ENCODE measurements at regions of chr19 and their contacts with region 1.

Region 1: GRCh38 chr19:45250832-45251451 is at the start of gene MARK4:
- DNase-seq: peak; percentile 54
- ATAC-seq: peak; percentile 69
- H3K4me3 ChIP-seq: peak within 1 kb of the TSS; percentile 78
- H3K27ac ChIP-seq: no peak within 1 kb of the TSS
- H3K4me1 ChIP-seq: peaks cover 10% of the 10 kb centered on the region; the same call in 1 of the 2 replicates
- H3K27me3 ChIP-seq: no peaks in the 10 kb centered on the region
- CTCF ChIP-seq: no peak
- total RNA-seq, gene MARK4: 12.1 and 21.8 TPM in 2 replicates

Region 2: GRCh38 chr19:44954824-44955586 is 295.9 kb before region 1 on chr19 and contains the start of gene CLPTM1:
- CTCF ChIA-PET with region 1: no interaction called
- POLR2A ChIA-PET with region 1: no interaction called
- intact Hi-C with region 1: no loop called
- DNase-seq: peak; percentile 90
- ATAC-seq: peak; percentile 91
- H3K4me3 ChIP-seq: peak within 1 kb of the TSS; percentile 95
- H3K27ac ChIP-seq: peak within 1 kb of the TSS; percentile 92
- H3K4me1 ChIP-seq: peaks cover 11% of the 10 kb centered on the region; the same call in 1 of the 2 replicates
- H3K27me3 ChIP-seq: no peaks in the 10 kb centered on the region
- CTCF ChIP-seq: no peak
- total RNA-seq, gene CLPTM1: 44.9 and 61.3 TPM in 2 replicates

Region 3: GRCh38 chr19:45016388-45017319 is 234.3 kb before region 1 on chr19:
- CTCF ChIA-PET with region 1: no interaction called
- POLR2A ChIA-PET with region 1: no interaction called
- intact Hi-C with region 1: loop called (anchors 10 kb)
- DNase-seq: peak; percentile 72
- ATAC-seq: peak; percentile 97
- H3K4me3 ChIP-seq: no peak overlapping the region
- H3K27ac ChIP-seq: no peak overlapping the region
- H3K4me1 ChIP-seq: no peaks in the 10 kb centered on the region
- H3K27me3 ChIP-seq: no peaks in the 10 kb centered on the region
- CTCF ChIP-seq: peak; percentile 66

Region 4: GRCh38 chr19:45218911-45219743 is 31.8 kb before region 1 on chr19:
- CTCF ChIA-PET with region 1: interaction called, 13 read pairs
- POLR2A ChIA-PET with region 1: no interaction called
- intact Hi-C with region 1: no loop called
- DNase-seq: no peak
- ATAC-seq: no peak
- H3K4me3 ChIP-seq: no peak overlapping the region
- H3K27ac ChIP-seq: no peak overlapping the region
- H3K4me1 ChIP-seq: no peaks in the 10 kb centered on the region
- H3K27me3 ChIP-seq: 0 out of 2 replicates have a peak, but pooled peaks cover 12% of the 10 kb centered on the region
- CTCF ChIP-seq: no peak

Region 5: DNA sequence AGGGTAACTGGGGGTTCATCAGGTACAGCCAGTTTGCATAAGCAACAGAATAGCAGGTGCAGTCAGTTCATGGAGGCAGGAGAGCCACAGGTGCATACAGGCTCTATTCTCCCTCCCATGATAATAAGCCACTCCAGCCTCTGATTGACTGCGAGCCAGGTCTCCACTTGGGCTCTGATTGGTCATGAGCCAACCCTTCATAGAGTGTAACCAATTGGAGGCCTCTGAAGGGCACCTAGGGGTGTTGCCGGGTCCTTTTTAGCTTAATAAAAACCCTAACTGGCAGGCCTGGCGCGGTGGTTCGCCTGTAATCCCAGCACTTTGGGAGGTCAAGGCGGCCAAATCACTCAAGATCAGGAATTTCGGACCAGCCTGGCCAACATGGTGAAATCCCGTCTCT is 80.5 kb after region 1 on chr19:
- CTCF ChIA-PET with region 1: no interaction called
- POLR2A ChIA-PET with region 1: no interaction called
- intact Hi-C with region 1: no loop called
- DNase-seq: no peak
- ATAC-seq: no peak
- H3K4me3 ChIP-seq: no peak overlapping the region
- H3K27ac ChIP-seq: no peak overlapping the region
- H3K4me1 ChIP-seq: no peaks in the 10 kb centered on the region
- H3K27me3 ChIP-seq: no peaks in the 10 kb centered on the region
- CTCF ChIP-seq: no peak

Region 6: GRCh38 chr19:45346449-45346848 is 95.5 kb after region 1 on chr19:
- CTCF ChIA-PET with region 1: no interaction called
- POLR2A ChIA-PET with region 1: no interaction called
- intact Hi-C with region 1: no loop called
- DNase-seq: no peak
- ATAC-seq: no peak
- H3K4me3 ChIP-seq: no peak overlapping the region
- H3K27ac ChIP-seq: no peak overlapping the region
- H3K4me1 ChIP-seq: peaks cover 6% of the 10 kb centered on the region; the same call in 1 of the 2 replicates
- H3K27me3 ChIP-seq: no peaks in the 10 kb centered on the region
- CTCF ChIP-seq: no peak

Measured in PC-3 (cell line).